Dorsolateral prefrontal cortex (tissue), 120 donors: ENCODE measurements at regions of chr7 and their contacts with region 1.

Region 1: GRCh38 chr7:150356265-150356897 is 12.2 kb upstream of the REPIN1 start:
- DNase-seq: no peak
- H3K4me3 ChIP-seq: no peak overlapping the region
- H3K27ac ChIP-seq: no peak overlapping the region
- H3K27me3 ChIP-seq: no peaks in the 10 kb centered on the region
- CTCF ChIP-seq: peak; percentile 54 to 87 (median 74)

Region 2: GRCh38 chr7:150311711-150312110 is 44.7 kb before region 1 on chr7:
- intact Hi-C with region 1: no loop called
- DNase-seq: no peak
- H3K4me3 ChIP-seq: no peak overlapping the region
- H3K27ac ChIP-seq: no peak overlapping the region
- H3K27me3 ChIP-seq: no peaks in the 10 kb centered on the region
- CTCF ChIP-seq: no peak

Region 3: DNA sequence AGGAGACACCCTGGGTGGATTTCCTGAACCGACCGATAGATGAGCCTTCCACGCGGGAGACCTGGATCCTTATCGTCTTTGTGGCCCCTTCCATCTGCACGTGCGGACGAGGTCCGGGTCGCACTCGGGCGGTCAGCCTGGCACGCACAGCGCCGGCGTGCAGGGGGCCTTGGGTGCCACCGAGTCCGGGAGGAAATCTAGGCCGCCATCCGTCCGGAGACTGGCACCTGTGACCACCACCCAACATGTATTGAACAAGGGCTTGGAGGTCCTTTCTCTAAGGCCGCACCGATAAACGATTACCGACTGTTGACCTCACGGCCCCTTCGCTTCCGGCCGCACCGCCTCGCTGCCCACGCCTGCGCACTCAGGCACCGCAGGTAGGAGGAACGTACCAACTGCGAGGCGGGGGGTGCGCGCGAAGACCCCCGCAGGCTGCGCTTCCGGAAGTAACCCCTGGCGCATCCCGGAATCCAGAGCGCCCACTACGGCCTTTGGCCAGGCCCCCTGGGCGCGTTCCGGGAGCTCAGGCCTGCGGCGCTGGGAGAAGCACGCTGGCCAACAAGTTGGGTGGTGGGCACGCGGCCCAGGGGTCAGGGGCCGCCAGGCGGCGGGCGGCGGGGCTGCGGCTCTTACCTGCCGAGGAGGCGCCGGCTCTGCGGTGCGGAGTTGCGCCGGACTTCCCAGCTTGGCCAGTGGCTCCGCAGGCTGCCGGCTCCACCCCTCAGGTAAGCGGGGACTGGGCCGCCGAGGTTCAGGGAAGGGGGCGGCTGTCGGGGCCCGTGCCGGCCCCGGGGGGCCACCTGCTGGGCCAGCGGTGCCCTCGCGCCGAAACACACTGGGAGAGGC is 33.3 kb before region 1 on chr7 and contains the starts of genes ACTR3C and LRRC61:
- intact Hi-C with region 1: no loop called
- DNase-seq: peak in 2 of 10 donors; percentile 29 to 45
- H3K4me3 ChIP-seq: peak within 1 kb of the TSS; percentile 48 to 88 (median 70)
- H3K27ac ChIP-seq: peak within 1 kb of the TSS in 45 of 59 donors; percentile 1 to 86 (median 60)
- H3K27me3 ChIP-seq: peaks cover 0 to 16% (median 0%) of the 10 kb centered on the region in 45 donors
- CTCF ChIP-seq: peak in 1 of 56 donors; percentile 7
- total RNA-seq, gene ACTR3C: 1.9 to 30.5 (median 9.7) TPM
- total RNA-seq, gene LRRC61: 2.9 to 15.0 (median 7.7) TPM

Region 4: GRCh38 chr7:150388709-150389531 is 32.5 kb after region 1 on chr7:
- intact Hi-C with region 1: loop called in 1 of 2 experiments (anchors 2 kb)
- DNase-seq: peak; percentile 67 to 84 (median 80)
- H3K4me3 ChIP-seq: peak overlapping the region in 10 of 59 donors; percentile 1 to 25 (median 12)
- H3K27ac ChIP-seq: peak overlapping the region in 57 of 59 donors; percentile 2 to 99 (median 79)
- H3K27me3 ChIP-seq: no peaks in the 10 kb centered on the region
- CTCF ChIP-seq: peak; percentile 52 to 98 (median 85)